PC-9 (cell line): ENCODE measurements at regions of chr5 and their contacts with region 1.

Region 1: DNA sequence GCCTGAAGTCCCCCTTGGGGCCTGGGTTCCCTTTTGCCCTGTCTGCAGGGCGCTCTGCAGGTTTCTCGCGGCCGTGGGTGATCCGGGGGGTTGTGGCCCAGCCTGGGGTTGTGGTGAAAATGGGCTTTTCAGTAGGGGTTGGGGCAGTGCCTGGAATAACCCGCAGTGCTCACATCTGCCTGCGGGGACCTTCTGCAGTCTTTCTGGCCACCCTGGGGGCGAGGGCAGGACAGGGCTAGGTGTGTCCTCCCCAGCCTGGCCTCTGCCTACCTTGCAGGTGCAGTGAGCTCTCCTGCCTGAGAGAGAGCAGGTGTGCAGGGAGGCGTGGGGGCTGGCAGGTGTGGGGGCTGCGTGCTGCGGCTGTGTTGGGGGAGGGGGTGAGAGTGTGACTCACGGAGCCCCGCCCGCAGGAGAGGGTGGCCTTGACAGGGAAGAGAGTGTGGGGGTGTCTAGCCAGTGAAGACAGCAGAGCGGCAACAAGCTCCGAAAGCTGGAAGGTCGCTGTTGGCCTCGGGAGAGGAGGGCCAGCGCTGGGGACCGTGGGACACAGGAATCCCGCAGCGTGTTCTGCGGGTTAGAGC is 131.4 kb downstream of the MRPL36 start:
- DNase-seq: no peak
- H3K4me3 ChIP-seq: no peak overlapping the region
- H3K27ac ChIP-seq: no peak overlapping the region
- H3K4me1 ChIP-seq: no peaks in the 10 kb centered on the region
- H3K27me3 ChIP-seq: peaks cover 88% of the 10 kb centered on the region
- CTCF ChIP-seq: no peak

Region 2: GRCh38 chr5:590346-590745 is 1077.9 kb before region 1 on chr5:
- CTCF ChIA-PET with region 1: interaction called, 12 read pairs
- POLR2A ChIA-PET with region 1: no interaction called
- intact Hi-C with region 1: no loop called
- DNase-seq: no peak
- H3K4me3 ChIP-seq: no peak overlapping the region
- H3K27ac ChIP-seq: no peak overlapping the region
- H3K4me1 ChIP-seq: no peaks in the 10 kb centered on the region
- H3K27me3 ChIP-seq: peaks cover 100% of the 10 kb centered on the region
- CTCF ChIP-seq: no peak